ENCODE measurements at regions of chr1 and their contacts with region 1.

Region 1: GRCh38 chr1:218345673-218346390 is 696 bp downstream of the TGFB2 start:
- DNase-seq: peak; percentile 80
- ATAC-seq: peak; percentile 81

Region 2: GRCh38 chr1:218459878-218460711 is 114.3 kb after region 1 on chr1:
- intact Hi-C with region 1: loop called (anchors 5 kb)
- DNase-seq: no peak
- ATAC-seq: peak; percentile 64

Region 3: GRCh38 chr1:218521375-218522169 is 175.7 kb after region 1 on chr1:
- intact Hi-C with region 1: loop called (anchors 5 kb)
- DNase-seq: no peak
- ATAC-seq: peak; percentile 34

Region 4: DNA sequence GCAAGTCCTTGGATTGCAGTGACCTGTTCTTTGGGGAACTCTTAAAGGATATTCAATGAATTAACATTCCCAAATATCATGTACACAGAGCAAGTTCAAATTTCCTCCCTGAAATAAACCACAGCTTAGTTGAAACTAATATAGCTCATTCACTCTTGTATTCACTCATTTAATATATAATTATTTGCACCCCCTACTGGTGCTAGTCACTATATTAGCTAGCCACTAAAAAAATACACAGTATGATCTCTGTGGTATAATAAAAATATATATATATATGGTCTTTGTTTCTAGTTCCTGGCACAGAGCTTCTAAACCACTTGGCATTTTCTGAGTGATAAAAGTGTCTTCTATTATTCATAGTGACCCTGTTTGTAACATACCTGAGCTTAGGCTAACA is 650.5 kb after region 1 on chr1:
- intact Hi-C with region 1: loop called (anchors 10 kb)
- DNase-seq: no peak
- ATAC-seq: no peak

Region 5: GRCh38 chr1:219173758-219174588 is 828.1 kb after region 1 on chr1 and contains the start of gene LYPLAL1:
- intact Hi-C with region 1: loop called (anchors 10 kb)
- DNase-seq: peak; percentile 97
- ATAC-seq: peak; percentile 95
- total RNA-seq, gene LYPLAL1: 68.7 TPM